ENCODE measurements at regions of chr1 and their contacts with region 1.

Region 1: DNA sequence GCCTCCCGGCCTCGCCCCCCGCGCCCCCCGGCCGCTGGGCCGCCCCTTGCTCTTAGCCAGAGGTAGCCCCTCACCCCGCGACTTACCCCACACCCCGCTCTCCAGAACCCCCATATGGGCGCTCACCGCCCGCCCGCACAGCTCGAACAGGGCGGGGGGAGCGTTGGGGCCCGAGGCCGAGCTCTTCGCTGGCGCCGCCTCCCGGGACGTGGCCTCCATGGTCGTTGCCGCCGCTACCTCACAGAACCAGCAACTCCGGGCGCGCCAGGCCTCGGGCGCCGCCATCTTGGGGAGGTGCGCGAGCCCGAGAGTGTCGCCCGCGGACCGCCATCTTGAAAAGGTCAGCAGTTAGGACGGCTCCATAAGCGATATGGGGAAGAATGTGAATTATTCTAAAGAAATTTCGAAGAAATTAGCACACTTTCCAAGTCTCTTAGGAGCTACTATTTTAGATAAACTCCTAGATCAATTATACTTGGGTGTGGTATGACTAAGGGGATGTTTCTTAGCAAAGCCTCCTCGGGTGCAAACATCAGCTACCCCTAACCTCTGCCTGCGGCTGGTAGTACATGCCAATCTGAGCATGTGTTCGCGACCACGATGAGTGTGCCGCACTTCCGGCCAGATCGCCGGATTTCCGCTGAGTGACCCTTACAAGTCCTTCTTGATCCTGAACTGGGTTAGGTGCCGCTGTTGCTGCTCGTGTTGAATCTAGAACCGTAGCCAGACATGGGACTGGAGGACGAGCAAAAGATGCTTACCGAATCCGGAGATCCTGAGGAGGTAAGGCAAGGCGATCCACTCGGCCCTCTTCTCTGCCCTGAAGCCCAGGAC is at the starts of genes LRRC41 and UQCRH:
- DNase-seq: peak; percentile 97
- ATAC-seq: peak; percentile 85
- H3K4me3 ChIP-seq: peak within 1 kb of the TSS; percentile 67 to 98 (median 82)
- H3K4me3 Mint-ChIP-seq: peak within 1 kb of the TSS; percentile 100
- H3K27ac ChIP-seq: peak within 1 kb of the TSS; percentile 77 to 92
- H3K27ac Mint-ChIP-seq: peak within 1 kb of the TSS; percentile 99
- H3K4me1 ChIP-seq: peaks cover 24 to 43% of the 10 kb centered on the region in 2 donors
- H3K4me1 Mint-ChIP-seq: peaks cover 52% of the 10 kb centered on the region
- H3K27me3 ChIP-seq: no peaks in the 10 kb centered on the region
- H3K27me3 Mint-ChIP-seq: no peaks in the 10 kb centered on the region
- CTCF ChIP-seq: no peak
- total RNA-seq, gene LRRC41: 39.0 and 40.7 TPM in 2 replicates
- total RNA-seq, gene UQCRH: 144 and 146 TPM in 2 replicates

Region 2: GRCh38 chr1:45803301-45803780 is 499.9 kb before region 1 on chr1 and contains the start of gene MAST2:
- CTCF ChIA-PET with region 1: no interaction called
- POLR2A ChIA-PET with region 1: no interaction called
- intact Hi-C with region 1: no loop called
- DNase-seq: peak; percentile 92
- ATAC-seq: peak; percentile 97
- H3K4me3 ChIP-seq: peak within 1 kb of the TSS; percentile 31 to 64 (median 52)
- H3K4me3 Mint-ChIP-seq: peak within 1 kb of the TSS; percentile 98
- H3K27ac ChIP-seq: no peak within 1 kb of the TSS
- H3K27ac Mint-ChIP-seq: peak within 1 kb of the TSS; percentile 71
- H3K4me1 ChIP-seq: peaks cover 11 to 15% of the 10 kb centered on the region in 2 donors
- H3K4me1 Mint-ChIP-seq: peaks cover 27% of the 10 kb centered on the region
- H3K27me3 ChIP-seq: no peaks in the 10 kb centered on the region
- H3K27me3 Mint-ChIP-seq: no peaks in the 10 kb centered on the region
- CTCF ChIP-seq: no peak
- total RNA-seq, gene MAST2: 23.3 and 26.4 TPM in 2 replicates

Region 3: DNA sequence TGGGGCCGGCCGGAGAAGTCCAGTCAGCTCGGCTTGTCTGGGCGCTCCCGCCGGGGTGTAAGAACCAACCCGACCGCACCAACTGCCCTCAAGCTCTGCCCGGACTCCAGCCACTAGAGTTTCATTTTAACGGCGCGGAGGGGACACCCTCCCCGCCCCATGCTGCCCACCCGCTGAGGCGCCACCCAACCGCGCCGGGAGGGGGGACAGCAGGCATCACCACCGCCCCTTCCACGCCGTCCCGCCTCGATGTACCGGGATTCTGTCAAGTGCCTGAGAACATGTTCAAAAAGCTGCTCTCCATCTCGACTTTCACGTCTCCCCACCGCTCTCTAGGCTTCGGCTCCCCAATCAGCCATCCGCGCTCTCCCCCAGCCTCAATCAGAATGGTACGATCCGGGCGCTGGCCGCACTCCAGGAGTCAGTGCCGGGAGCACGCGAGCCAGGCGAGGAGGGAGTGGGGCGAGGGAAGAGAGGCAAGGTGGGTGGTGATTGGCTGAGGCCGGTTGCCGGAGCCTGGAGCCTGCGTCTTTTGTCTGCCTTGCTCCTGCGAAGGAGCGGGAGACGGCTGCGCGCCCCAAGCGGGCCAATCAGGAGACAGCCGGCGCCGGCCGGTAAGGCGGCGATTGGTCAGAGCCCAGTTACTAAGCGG is 170.6 kb before region 1 on chr1 and contains the start of gene PIK3R3:
- CTCF ChIA-PET with region 1: no interaction called
- POLR2A ChIA-PET with region 1: no interaction called
- intact Hi-C with region 1: loop called (anchors 5 kb)
- DNase-seq: peak; percentile 88
- ATAC-seq: peak; percentile 88
- H3K4me3 ChIP-seq: peak within 1 kb of the TSS; percentile 73 to 92 (median 77)
- H3K4me3 Mint-ChIP-seq: peak within 1 kb of the TSS; percentile 94
- H3K27ac ChIP-seq: peak within 1 kb of the TSS; percentile 30 to 40
- H3K27ac Mint-ChIP-seq: peak within 1 kb of the TSS; percentile 76
- H3K4me1 ChIP-seq: peaks cover 17 to 20% of the 10 kb centered on the region in 2 donors
- H3K4me1 Mint-ChIP-seq: peaks cover 23% of the 10 kb centered on the region
- H3K27me3 ChIP-seq: peaks cover 0 to 41% (median 24%) of the 10 kb centered on the region in 4 experiments
- H3K27me3 Mint-ChIP-seq: peaks cover 48% of the 10 kb centered on the region
- CTCF ChIP-seq: no peak
- total RNA-seq, gene PIK3R3: 0.17 and 0.78 TPM in 2 replicates

Region 4: DNA sequence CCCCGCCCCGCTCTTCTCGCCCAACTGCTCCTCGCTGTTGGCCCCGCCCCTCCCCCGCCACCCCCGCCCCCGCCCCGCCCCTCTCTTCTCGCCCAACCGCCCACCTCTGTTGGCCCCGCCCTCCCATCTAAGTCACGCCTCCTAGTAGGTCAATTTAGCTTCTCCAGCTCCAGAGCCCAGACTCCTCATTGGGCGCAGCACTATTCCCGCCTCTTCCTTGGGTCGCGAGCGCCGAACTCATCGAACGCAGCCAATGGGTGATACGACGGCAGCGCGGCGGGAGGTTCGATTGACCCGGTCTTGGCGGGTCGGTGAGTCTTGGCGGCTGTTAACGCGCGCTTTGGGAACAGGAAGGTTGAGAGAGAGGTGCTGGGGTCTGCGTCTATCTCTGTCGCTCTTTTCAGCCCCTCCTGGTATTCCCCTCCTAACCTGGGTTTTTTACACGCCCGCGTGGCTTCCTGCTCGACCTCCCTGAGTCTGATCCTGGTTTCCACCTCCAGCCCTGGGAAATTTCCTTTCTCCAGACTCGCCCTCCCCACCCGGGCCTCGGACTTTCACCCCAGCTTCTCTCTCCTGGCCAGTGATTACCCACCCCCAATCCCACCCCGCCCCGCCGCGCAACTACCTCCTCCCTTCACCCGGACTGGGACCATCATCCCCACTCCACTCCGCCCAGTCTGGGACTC is 55.7 kb before region 1 on chr1 and contains the start of gene RAD54L:
- CTCF ChIA-PET with region 1: interaction called, 7 read pairs
- POLR2A ChIA-PET with region 1: interaction called, 17 read pairs
- intact Hi-C with region 1: loop called (anchors 1 kb)
- DNase-seq: peak; percentile 97
- ATAC-seq: peak; percentile 95
- H3K4me3 ChIP-seq: peak within 1 kb of the TSS; percentile 70 to 77 (median 76)
- H3K4me3 Mint-ChIP-seq: peak within 1 kb of the TSS; percentile 98
- H3K27ac ChIP-seq: peak within 1 kb of the TSS; percentile 39 to 63
- H3K27ac Mint-ChIP-seq: peak within 1 kb of the TSS; percentile 89
- H3K4me1 ChIP-seq: peaks cover 12 to 17% of the 10 kb centered on the region in 2 donors
- H3K4me1 Mint-ChIP-seq: peaks cover 16% of the 10 kb centered on the region
- H3K27me3 ChIP-seq: no peaks in the 10 kb centered on the region
- H3K27me3 Mint-ChIP-seq: no peaks in the 10 kb centered on the region
- CTCF ChIP-seq: no peak
- total RNA-seq, gene RAD54L: 1.1 and 1.9 TPM in 2 replicates

Region 5: DNA sequence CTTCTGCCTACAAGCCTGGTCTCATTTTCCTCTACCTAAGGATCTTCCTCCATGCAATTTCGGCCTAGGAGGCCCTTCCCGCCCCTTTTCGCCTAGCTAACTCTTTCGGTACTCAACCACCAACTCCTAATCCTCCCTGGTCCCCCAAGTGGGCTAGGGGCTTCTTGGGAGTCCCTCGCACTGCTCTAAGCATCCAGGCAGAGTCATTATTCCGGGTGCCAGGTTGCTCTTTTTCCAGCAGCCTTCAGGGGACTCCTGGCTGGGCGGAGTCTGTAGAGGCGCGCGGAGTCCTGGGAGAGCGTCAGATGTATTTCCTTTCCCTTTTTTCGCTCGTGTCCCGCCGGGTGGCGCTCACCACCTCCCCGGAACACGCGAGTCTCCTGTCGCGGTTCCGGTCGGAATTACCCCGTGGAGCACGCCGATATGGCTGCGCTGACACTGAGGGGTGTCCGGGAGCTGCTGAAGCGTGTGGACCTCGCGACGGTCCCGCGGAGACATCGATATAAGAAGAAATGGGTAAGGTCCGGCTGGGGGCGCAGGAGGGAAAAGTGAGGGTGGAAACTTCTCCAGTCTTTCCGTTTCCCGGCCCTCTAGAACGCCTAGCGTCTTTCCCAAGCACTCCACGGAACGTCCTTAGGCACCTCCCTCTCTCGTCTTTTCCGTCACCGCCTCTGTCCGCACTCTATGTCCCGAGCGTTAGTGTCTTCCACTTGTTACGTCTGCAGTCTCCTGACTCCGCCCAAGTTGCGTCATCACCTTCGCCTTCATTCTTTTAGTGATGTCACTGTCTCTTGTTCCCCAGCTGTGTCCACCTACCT is 37.4 kb after region 1 on chr1 and contains the start of gene NSUN4:
- CTCF ChIA-PET with region 1: interaction called, 31 read pairs
- POLR2A ChIA-PET with region 1: interaction called, 8 read pairs
- intact Hi-C with region 1: loop called (anchors 1 kb)
- DNase-seq: peak; percentile 94
- ATAC-seq: peak; percentile 79
- H3K4me3 ChIP-seq: peak within 1 kb of the TSS; percentile 69 to 99 (median 97)
- H3K4me3 Mint-ChIP-seq: peak within 1 kb of the TSS; percentile 100
- H3K27ac ChIP-seq: peak within 1 kb of the TSS; percentile 99 to 100
- H3K27ac Mint-ChIP-seq: peak within 1 kb of the TSS; percentile 99
- H3K4me1 ChIP-seq: peaks cover 10 to 21% of the 10 kb centered on the region in 2 donors
- H3K4me1 Mint-ChIP-seq: peaks cover 30% of the 10 kb centered on the region
- H3K27me3 ChIP-seq: no peaks in the 10 kb centered on the region
- H3K27me3 Mint-ChIP-seq: no peaks in the 10 kb centered on the region
- CTCF ChIP-seq: peak; percentile 64
- total RNA-seq, gene NSUN4: 30.1 and 33.7 TPM in 2 replicates

Region 6: GRCh38 chr1:46718727-46719622 is 415.7 kb after region 1 on chr1 and contains the start of gene EFCAB14:
- CTCF ChIA-PET with region 1: no interaction called
- POLR2A ChIA-PET with region 1: interaction called, 3 read pairs
- intact Hi-C with region 1: loop called (anchors 5 kb)
- DNase-seq: peak; percentile 99
- ATAC-seq: peak; percentile 99
- H3K4me3 ChIP-seq: peak within 1 kb of the TSS; percentile 84 to 95 (median 87)
- H3K4me3 Mint-ChIP-seq: peak within 1 kb of the TSS; percentile 89
- H3K27ac ChIP-seq: peak within 1 kb of the TSS; percentile 48 to 89
- H3K27ac Mint-ChIP-seq: peak within 1 kb of the TSS; percentile 95
- H3K4me1 ChIP-seq: peaks cover 24 to 25% of the 10 kb centered on the region in 2 donors
- H3K4me1 Mint-ChIP-seq: peaks cover 40% of the 10 kb centered on the region
- H3K27me3 ChIP-seq: no peaks in the 10 kb centered on the region
- H3K27me3 Mint-ChIP-seq: no peaks in the 10 kb centered on the region
- CTCF ChIP-seq: no peak
- total RNA-seq, gene EFCAB14: 90.0 and 98.8 TPM in 2 replicates